Tibial artery (tissue), 4 donors: ENCODE measurements at regions of chr4 and their contacts with region 1.

Region 1: DNA sequence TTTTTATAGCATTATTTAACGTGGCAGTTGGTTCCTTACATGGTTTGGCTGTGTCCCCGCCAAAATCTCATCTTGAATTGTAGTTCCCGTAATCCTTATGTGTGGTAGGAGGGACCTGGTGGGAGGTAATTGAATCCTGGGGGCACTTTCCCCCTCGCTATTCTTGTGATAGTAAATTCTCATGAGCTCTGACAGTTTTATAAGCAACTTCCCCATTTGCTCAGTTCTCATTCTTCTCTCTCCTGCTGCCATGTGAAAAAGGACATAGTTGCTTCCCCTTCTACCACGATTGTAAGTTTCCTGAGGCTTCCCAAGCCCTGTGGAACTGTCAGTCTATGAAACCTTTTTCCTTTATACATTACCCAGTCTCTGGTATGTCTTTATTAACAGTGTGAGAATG is 329.5 kb downstream of the GRIA2 start:
- DNase-seq: no peak
- H3K4me3 ChIP-seq: no peak overlapping the region
- H3K27ac ChIP-seq: no peak overlapping the region
- H3K4me1 ChIP-seq: no peaks in the 10 kb centered on the region
- H3K27me3 ChIP-seq: no peaks in the 10 kb centered on the region
- CTCF ChIP-seq: no peak

Region 2: GRCh38 chr4:155984106-155984797 is 1565.8 kb before region 1 on chr4:
- intact Hi-C with region 1: loop called (anchors 5 kb)
- DNase-seq: no peak
- H3K4me3 ChIP-seq: no peak overlapping the region
- H3K27ac ChIP-seq: no peak overlapping the region
- H3K4me1 ChIP-seq: no peaks in the 10 kb centered on the region
- H3K27me3 ChIP-seq: no peaks in the 10 kb centered on the region
- CTCF ChIP-seq: no peak

Region 3: GRCh38 chr4:157043131-157043530 is 506.9 kb before region 1 on chr4:
- intact Hi-C with region 1: no loop called
- DNase-seq: no peak
- H3K4me3 ChIP-seq: no peak overlapping the region
- H3K27ac ChIP-seq: no peak overlapping the region
- H3K4me1 ChIP-seq: peaks cover 0 to 3% (median 0%) of the 10 kb centered on the region in 4 donors
- H3K27me3 ChIP-seq: no peaks in the 10 kb centered on the region
- CTCF ChIP-seq: no peak

Region 4: DNA sequence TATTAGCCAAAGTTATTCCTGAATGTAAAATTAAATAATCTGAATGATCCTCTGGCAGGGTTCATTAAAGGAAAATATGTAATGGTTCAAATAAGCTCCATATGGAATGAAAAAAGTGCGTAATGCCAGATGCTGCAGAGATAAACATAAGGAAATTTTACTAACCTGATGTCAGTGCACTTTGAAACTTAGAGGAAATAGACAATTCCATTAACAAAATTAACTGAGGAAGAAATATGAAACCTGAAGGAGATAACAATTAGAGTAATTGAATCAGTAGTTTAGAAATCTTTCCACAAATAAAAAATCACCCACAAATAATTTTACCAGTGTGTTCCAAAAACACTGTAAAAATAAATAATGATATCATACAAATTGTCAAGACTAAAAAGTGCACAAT is 57.9 kb after region 1 on chr4:
- intact Hi-C with region 1: no loop called
- DNase-seq: no peak
- H3K4me3 ChIP-seq: no peak overlapping the region
- H3K27ac ChIP-seq: no peak overlapping the region
- H3K4me1 ChIP-seq: peaks cover 0 to 8% (median 0%) of the 10 kb centered on the region in 4 donors
- H3K27me3 ChIP-seq: no peaks in the 10 kb centered on the region
- CTCF ChIP-seq: no peak